ENCODE measurements at regions of chr5 and their contacts with region 1.

Region 1: GRCh38 chr5:112160652-112161391 is 258.3 kb downstream of the EPB41L4A start:
- DNase-seq: peak; percentile 91
- H3K4me3 Mint-ChIP-seq: peak overlapping the region; percentile 88
- H3K27ac Mint-ChIP-seq: peak overlapping the region; percentile 90
- H3K4me1 Mint-ChIP-seq: peaks cover 28% of the 10 kb centered on the region
- H3K27me3 Mint-ChIP-seq: peaks cover 17% of the 10 kb centered on the region

Region 2: GRCh38 chr5:112174959-112175594 is 14.3 kb after region 1 on chr5:
- CTCF ChIA-PET with region 1: interaction called, 29 read pairs
- DNase-seq: peak; percentile 49
- H3K4me3 Mint-ChIP-seq: no peak overlapping the region
- H3K27ac Mint-ChIP-seq: no peak overlapping the region
- H3K4me1 Mint-ChIP-seq: no peaks in the 10 kb centered on the region
- H3K27me3 Mint-ChIP-seq: peaks cover 4% of the 10 kb centered on the region

Measured in activated naive CD4-positive, alpha-beta T cell treated with anti-CD3 and anti-CD28 coated beads, Interleukin-2, amount 10 ng/mL, durations not matched to agents 7 days and 5 days (primary cell).